Activated CD4-positive, alpha-beta T cell treated with anti-CD3 and anti-CD28 coated beads for 36 hours (primary cell): ENCODE measurements at regions of chr10 and their contacts with region 1.

Region 1: DNA sequence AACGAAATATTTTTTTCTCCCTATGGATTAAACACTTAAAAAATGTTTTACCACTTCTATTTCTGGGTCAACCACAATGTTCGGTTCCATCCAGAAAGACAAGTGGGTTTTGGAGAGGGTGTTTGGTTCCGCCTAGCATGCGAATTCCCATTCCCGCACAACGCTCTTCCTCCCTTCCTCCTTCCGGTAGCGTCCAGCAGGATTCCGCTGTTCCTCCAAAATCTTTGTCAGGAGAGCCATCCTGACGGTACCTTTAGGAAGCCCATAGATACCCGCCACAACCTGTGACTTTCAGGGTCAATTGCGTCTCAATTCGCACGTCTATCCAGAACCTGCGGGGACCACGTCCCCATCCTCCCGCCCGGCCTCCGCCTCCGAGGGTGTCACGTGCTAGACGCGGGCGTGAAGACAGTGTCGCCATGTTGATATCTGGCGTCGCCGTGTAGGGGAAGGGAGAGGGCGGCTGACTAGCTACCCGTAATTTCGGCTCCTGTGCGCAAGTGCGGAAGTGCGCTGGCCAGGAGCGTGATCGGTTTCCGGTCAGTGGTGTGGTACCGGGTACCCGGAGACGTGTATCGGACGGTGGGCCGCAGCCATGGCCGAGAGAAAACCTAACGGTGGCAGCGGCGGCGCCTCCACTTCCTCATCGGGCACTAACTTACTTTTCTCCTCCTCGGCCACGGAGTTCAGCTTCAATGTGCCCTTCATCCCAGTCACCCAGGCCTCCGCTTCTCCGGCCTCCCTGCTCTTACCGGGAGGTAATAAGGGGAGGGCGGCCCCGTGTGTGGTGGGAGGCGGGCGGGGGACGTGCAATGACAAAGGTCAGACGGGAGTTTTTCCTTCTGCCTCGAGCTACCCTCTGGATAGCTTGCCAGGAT is at the start of gene SEC23IP:
- DNase-seq: peak; percentile 96
- ATAC-seq: peak; percentile 100
- H3K4me3 Mint-ChIP-seq: peak within 1 kb of the TSS; percentile 84
- H3K27ac Mint-ChIP-seq: peak within 1 kb of the TSS; percentile 95
- H3K4me1 Mint-ChIP-seq: peaks cover 43% of the 10 kb centered on the region
- H3K27me3 Mint-ChIP-seq: no peaks in the 10 kb centered on the region
- total RNA-seq, gene SEC23IP: 70.3 to 87.2 TPM

Region 2: GRCh38 chr10:119421887-119422681 is 470.3 kb before region 1 on chr10:
- CTCF ChIA-PET with region 1: no interaction called
- POLR2A ChIA-PET with region 1: no interaction called
- intact Hi-C with region 1: no loop called
- DNase-seq: no peak
- ATAC-seq: no peak
- H3K4me3 Mint-ChIP-seq: no peak overlapping the region
- H3K27ac Mint-ChIP-seq: no peak overlapping the region
- H3K4me1 Mint-ChIP-seq: no peaks in the 10 kb centered on the region
- H3K27me3 Mint-ChIP-seq: no peaks in the 10 kb centered on the region

Region 3: DNA sequence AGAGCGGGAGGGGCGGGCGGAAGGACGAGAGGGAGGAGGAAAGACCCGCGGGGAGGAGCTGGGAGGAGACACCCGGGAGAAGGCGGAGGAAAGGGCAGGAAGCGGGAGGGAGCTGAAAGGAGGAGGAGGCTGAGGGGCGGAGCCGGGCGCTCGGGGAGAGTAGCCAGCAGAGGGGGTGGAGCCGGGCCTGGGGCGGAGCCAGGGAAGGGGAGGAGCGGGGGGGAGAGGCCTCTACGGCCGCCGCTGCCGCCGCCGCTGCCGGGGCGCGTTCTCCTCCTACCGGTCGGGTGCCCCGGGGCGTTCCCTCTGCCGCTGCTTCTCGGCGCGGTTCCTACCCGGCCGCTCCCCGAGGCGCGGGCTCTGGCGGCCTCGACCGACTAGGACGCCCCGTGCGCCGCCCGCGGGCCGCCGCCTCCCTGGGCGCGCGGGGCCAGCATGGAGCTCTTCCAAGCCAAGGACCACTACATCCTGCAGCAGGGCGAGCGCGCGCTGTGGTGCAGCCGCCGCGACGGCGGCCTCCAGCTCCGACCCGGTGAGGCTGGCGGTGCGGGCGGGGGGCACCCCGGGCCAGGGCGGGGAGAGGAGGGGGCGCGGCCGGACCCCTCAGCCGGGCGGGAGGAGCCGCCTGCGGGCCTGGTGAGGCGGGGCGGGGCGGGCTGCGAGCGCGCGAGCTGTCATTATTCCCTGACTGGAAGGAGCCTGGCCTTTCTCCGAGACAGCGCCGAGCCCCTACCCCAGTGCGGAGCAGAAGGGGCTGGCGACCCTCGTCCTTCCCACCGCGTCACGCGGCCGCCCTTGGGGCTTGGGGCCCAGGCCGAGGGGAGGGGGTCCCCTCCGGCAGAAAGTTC is 166.4 kb before region 1 on chr10 and contains the start of gene INPP5F:
- CTCF ChIA-PET with region 1: no interaction called
- POLR2A ChIA-PET with region 1: no interaction called
- intact Hi-C with region 1: loop called in 1 of 2 experiments (anchors 1 kb)
- DNase-seq: peak; percentile 100
- ATAC-seq: peak; percentile 95
- H3K4me3 Mint-ChIP-seq: peak within 1 kb of the TSS; percentile 86
- H3K27ac Mint-ChIP-seq: peak within 1 kb of the TSS; percentile 73
- H3K4me1 Mint-ChIP-seq: peaks cover 47% of the 10 kb centered on the region
- H3K27me3 Mint-ChIP-seq: no peaks in the 10 kb centered on the region
- total RNA-seq, gene INPP5F: 10.9 to 12.6 TPM

Region 4: DNA sequence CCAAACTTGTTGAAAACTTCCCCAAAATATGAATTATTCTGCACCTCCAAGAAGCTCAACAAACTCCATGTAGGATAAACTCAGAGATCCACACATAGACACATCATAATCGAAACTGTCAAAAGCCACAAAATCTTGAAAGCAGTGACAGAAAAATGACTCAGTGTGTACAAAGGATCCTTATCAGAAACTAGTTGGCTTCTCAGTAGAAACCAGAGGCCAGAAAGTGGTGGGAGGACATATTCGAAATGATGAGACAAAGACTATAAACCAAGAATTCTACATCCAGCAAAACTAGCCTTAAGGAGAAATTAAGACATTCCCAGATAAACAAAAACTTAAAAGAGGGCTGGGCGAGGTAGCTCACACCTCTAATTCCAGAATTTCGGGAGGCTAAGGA is 58.2 kb before region 1 on chr10:
- CTCF ChIA-PET with region 1: interaction called, 3 read pairs
- POLR2A ChIA-PET with region 1: no interaction called
- intact Hi-C with region 1: loop called in 1 of 2 experiments (anchors 2 kb)
- DNase-seq: peak; percentile 35
- ATAC-seq: peak; percentile 80
- H3K4me3 Mint-ChIP-seq: no peak overlapping the region
- H3K27ac Mint-ChIP-seq: peak overlapping the region; percentile 83
- H3K4me1 Mint-ChIP-seq: peaks cover 38% of the 10 kb centered on the region
- H3K27me3 Mint-ChIP-seq: no peaks in the 10 kb centered on the region